Heart right ventricle (tissue), 16 donors: ENCODE measurements at regions of chr14 and their contacts with region 1.

Region 1: GRCh38 chr14:96001866-96002497 is 37.2 kb upstream of the C14orf132 start:
- DNase-seq: no peak
- ATAC-seq: no peak
- H3K4me3 ChIP-seq: no peak overlapping the region
- H3K27ac ChIP-seq: no peak overlapping the region
- H3K4me1 ChIP-seq: no peaks in the 10 kb centered on the region
- H3K27me3 ChIP-seq: peaks cover 0 to 62% (median 47%) of the 10 kb centered on the region in 7 donors
- CTCF ChIP-seq: no peak

Region 2: DNA sequence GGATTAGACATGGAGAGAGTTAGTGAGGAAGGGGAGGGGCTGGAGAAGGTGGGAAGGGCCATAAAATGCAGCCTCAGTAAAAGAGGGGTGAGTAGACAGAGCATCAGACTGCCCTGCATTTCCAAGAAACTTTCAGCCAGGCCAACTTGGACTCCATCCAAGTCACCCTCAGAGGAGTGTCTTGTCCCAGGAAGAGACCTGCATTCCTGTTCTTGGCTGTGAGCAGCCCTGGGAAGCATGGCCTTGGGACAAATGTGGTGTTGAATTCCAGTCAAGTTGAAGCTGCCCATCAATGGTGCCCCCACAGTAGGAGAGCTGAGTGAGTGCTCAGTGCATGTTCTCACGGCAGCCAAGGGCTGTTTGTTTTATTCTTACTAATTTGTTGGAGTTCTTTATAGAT is 160.3 kb before region 1 on chr14:
- intact Hi-C with region 1: no loop called
- DNase-seq: no peak
- ATAC-seq: no peak
- H3K4me3 ChIP-seq: no peak overlapping the region
- H3K27ac ChIP-seq: no peak overlapping the region
- H3K4me1 ChIP-seq: no peaks in the 10 kb centered on the region
- H3K27me3 ChIP-seq: peaks cover 0 to 19% (median 3%) of the 10 kb centered on the region in 7 donors
- CTCF ChIP-seq: no peak

Region 3: GRCh38 chr14:96090441-96091133 is 88.6 kb after region 1 on chr14:
- intact Hi-C with region 1: loop called in 6 of 10 experiments (anchors 5 to 10 kb)
- DNase-seq: peak; percentile 83 to 84
- ATAC-seq: peak; percentile 59 to 89 (median 78)
- H3K4me3 ChIP-seq: no peak overlapping the region
- H3K27ac ChIP-seq: no peak overlapping the region
- H3K4me1 ChIP-seq: peaks cover 0 to 24% (median 19%) of the 10 kb centered on the region in 9 donors
- H3K27me3 ChIP-seq: peaks cover 0 to 23% (median 7%) of the 10 kb centered on the region in 7 donors
- CTCF ChIP-seq: no peak

Region 4: DNA sequence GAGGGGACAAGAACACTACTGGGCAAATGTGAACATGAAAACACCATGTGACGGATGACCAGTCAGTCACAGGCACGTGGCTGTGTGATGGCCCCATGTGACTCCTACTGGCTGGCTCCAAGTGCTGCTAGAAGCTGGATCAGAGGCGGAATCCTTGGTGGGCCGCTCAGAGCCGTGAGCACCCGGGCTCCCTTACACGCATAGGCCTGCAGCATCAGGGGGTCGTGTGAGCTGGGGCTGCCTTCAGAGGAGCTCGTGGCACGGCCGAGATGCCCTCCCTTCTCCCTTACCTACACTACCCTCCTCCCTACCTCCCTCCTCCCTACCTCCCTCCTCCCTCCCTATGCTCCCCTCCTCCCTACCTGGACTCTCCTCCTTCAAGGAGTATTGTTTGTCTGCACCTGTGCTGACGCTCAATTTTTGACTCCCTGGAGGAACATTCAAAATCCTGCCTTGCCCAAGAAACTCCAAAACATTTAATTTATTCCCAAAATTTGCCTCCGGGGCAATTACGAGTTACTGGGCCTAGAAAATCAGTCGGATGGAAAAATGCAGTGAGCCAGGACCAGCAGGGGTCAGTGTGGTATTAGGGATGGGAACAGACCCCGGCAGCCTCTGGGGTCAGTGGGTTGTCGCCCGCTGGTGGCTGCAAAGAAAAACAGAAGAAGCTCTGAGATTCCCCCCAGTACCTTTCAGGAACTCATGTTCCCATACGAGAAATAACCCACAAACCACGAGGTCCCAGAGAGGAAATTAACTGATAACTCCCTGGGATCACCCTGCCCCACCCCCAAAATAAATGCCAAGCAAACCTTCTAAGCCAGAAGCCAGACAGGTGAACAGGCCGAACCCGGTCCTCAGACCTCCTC is 98.4 kb after region 1 on chr14:
- intact Hi-C with region 1: loop called in 7 of 10 experiments (anchors 2 to 10 kb)
- DNase-seq: peak; percentile 54 to 73
- ATAC-seq: peak in 5 of 8 donors; percentile 42 to 76 (median 67)
- H3K4me3 ChIP-seq: no peak overlapping the region
- H3K27ac ChIP-seq: no peak overlapping the region
- H3K4me1 ChIP-seq: peaks cover 0 to 3% (median 0%) of the 10 kb centered on the region in 9 donors
- H3K27me3 ChIP-seq: peaks cover 0 to 32% (median 26%) of the 10 kb centered on the region in 7 donors
- CTCF ChIP-seq: peak; percentile 46 to 91 (median 80)

Region 5: GRCh38 chr14:96275177-96276112 is 273.5 kb after region 1 on chr14:
- intact Hi-C with region 1: loop called (anchors 2 to 10 kb)
- DNase-seq: peak; percentile 52 to 73
- ATAC-seq: peak in 6 of 8 donors; percentile 50 to 77 (median 65)
- H3K4me3 ChIP-seq: no peak overlapping the region
- H3K27ac ChIP-seq: peak overlapping the region in 1 of 10 donors; percentile 29
- H3K4me1 ChIP-seq: peaks cover 0 to 10% (median 4%) of the 10 kb centered on the region in 9 donors
- H3K27me3 ChIP-seq: no peaks in the 10 kb centered on the region
- CTCF ChIP-seq: peak; percentile 75 to 98 (median 90)